Activated CD4-positive, alpha-beta memory T cell treated with anti-CD3 and anti-CD28 coated beads for 36 hours (primary cell): ENCODE measurements at regions of chr3 and their contacts with region 1.

Region 1: GRCh38 chr3:53709860-53710674 is 136.2 kb downstream of the CHDH start:
- DNase-seq: peak; percentile 74
- H3K4me3 Mint-ChIP-seq: no peak overlapping the region
- H3K27ac Mint-ChIP-seq: no peak overlapping the region
- H3K4me1 Mint-ChIP-seq: peaks cover 5% of the 10 kb centered on the region
- H3K27me3 Mint-ChIP-seq: peaks cover 2% of the 10 kb centered on the region

Region 2: DNA sequence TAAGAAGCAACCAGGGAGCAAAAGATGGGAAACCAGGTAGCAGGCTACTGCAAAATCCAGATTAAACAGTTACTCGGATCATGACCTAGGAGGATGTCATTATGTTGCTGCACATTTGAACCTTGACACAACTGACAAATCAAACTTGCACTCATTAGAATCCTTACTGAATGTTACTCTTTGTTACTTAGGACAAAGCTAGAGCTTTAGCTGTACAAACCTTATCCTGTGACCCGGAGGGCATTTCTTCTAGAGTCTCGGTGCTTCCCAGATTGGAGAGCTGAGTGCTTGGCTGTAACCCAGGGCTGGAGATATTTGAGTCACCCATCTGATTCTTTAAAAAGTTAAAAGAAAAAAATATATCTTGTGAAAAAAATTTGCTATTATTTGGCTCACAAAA is 406.1 kb before region 1 on chr3:
- CTCF ChIA-PET with region 1: interaction called, 7 read pairs
- POLR2A ChIA-PET with region 1: no interaction called
- intact Hi-C with region 1: loop called (anchors 5 kb)
- DNase-seq: no peak
- H3K4me3 Mint-ChIP-seq: no peak overlapping the region
- H3K27ac Mint-ChIP-seq: no peak overlapping the region
- H3K4me1 Mint-ChIP-seq: no peaks in the 10 kb centered on the region
- H3K27me3 Mint-ChIP-seq: no peaks in the 10 kb centered on the region

Region 3: DNA sequence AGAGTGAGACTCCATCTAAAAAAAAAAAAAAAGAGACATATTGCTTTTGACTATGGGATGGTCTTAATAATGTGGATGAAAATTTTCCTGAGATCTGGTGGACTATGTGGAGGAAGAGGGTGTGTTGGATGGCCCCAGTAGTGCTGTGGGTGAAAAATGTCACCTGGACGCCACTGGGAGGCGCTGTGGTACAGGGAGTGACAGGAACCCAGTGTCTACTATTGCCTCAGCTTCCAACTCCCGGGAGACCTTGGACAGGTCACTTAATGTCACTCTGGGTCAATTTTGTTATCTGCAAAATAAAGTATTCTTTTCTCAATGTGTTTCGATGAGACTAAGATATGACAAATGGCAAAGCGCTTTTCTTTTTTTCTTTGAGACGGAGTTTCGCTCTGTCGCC is 335.0 kb before region 1 on chr3:
- CTCF ChIA-PET with region 1: interaction called, 59 read pairs
- POLR2A ChIA-PET with region 1: no interaction called
- intact Hi-C with region 1: loop called (anchors 1 kb)
- DNase-seq: peak; percentile 75
- H3K4me3 Mint-ChIP-seq: no peak overlapping the region
- H3K27ac Mint-ChIP-seq: no peak overlapping the region
- H3K4me1 Mint-ChIP-seq: no peaks in the 10 kb centered on the region
- H3K27me3 Mint-ChIP-seq: peaks cover 22% of the 10 kb centered on the region